T-cell (primary cell): ENCODE measurements at regions of chr16 and their contacts with region 1.

Region 1: GRCh38 chr16:72182976-72183375 is 11.0 kb upstream of the PMFBP1 start:
- DNase-seq: no peak
- ATAC-seq: no peak
- H3K4me3 ChIP-seq: no peak overlapping the region
- H3K4me3 Mint-ChIP-seq: no peak overlapping the region
- H3K27ac ChIP-seq: no peak overlapping the region
- H3K27ac Mint-ChIP-seq: no peak overlapping the region
- H3K4me1 ChIP-seq: no peaks in the 10 kb centered on the region
- H3K4me1 Mint-ChIP-seq: no peaks in the 10 kb centered on the region
- H3K27me3 ChIP-seq: no peaks in the 10 kb centered on the region
- H3K27me3 Mint-ChIP-seq: no peaks in the 10 kb centered on the region

Region 2: GRCh38 chr16:72001180-72001874 is 181.6 kb before region 1 on chr16:
- CTCF ChIA-PET with region 1: no interaction called
- POLR2A ChIA-PET with region 1: no interaction called
- DNase-seq: no peak
- ATAC-seq: no peak
- H3K4me3 ChIP-seq: no peak overlapping the region
- H3K4me3 Mint-ChIP-seq: no peak overlapping the region
- H3K27ac ChIP-seq: no peak overlapping the region
- H3K27ac Mint-ChIP-seq: no peak overlapping the region
- H3K4me1 ChIP-seq: no peaks in the 10 kb centered on the region
- H3K4me1 Mint-ChIP-seq: peaks cover 0 to 5% (median 2%) of the 10 kb centered on the region in 3 donors
- H3K27me3 ChIP-seq: peaks cover 0 to 12% of the 10 kb centered on the region in 2 experiments
- H3K27me3 Mint-ChIP-seq: peaks cover 13% of the 10 kb centered on the region in 2 donors

Region 3: DNA sequence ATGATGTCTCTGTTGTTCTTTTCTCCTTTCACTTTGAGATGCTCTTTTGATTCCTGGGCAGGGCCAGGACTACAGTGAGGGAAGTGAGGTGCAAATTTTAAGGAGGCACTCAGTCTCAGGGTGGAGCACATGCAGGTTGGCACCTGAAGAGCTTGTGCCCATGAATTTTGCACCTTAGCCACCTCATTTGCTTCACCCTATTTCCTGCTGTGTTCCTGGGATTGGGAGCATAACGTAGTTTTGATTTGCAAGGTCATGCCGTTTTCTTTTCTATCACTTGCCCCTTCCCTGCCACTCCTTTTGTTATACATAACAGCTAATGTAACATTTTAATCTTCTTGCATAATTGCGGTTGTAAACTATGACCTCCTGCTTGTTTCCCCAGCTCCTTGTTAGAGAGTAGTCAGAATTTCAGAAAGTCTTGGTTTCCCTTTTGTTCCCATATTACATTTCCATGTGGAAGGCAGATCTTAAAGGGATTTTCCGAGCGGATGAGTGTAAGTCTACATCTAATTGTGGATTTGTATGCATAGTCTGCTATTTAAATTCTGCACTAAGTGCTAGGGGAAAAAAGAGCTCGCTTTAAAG is 20.8 kb before region 1 on chr16:
- CTCF ChIA-PET with region 1: interaction called in 1 of 2 experiments, 10 read pairs
- POLR2A ChIA-PET with region 1: interaction called in 1 of 2 experiments, 3 read pairs
- DNase-seq: no peak
- ATAC-seq: no peak
- H3K4me3 ChIP-seq: no peak overlapping the region
- H3K4me3 Mint-ChIP-seq: no peak overlapping the region
- H3K27ac ChIP-seq: no peak overlapping the region
- H3K27ac Mint-ChIP-seq: no peak overlapping the region
- H3K4me1 ChIP-seq: no peaks in the 10 kb centered on the region
- H3K4me1 Mint-ChIP-seq: no peaks in the 10 kb centered on the region
- H3K27me3 ChIP-seq: peaks cover 0 to 5% of the 10 kb centered on the region in 2 experiments
- H3K27me3 Mint-ChIP-seq: no peaks in the 10 kb centered on the region

Region 4: DNA sequence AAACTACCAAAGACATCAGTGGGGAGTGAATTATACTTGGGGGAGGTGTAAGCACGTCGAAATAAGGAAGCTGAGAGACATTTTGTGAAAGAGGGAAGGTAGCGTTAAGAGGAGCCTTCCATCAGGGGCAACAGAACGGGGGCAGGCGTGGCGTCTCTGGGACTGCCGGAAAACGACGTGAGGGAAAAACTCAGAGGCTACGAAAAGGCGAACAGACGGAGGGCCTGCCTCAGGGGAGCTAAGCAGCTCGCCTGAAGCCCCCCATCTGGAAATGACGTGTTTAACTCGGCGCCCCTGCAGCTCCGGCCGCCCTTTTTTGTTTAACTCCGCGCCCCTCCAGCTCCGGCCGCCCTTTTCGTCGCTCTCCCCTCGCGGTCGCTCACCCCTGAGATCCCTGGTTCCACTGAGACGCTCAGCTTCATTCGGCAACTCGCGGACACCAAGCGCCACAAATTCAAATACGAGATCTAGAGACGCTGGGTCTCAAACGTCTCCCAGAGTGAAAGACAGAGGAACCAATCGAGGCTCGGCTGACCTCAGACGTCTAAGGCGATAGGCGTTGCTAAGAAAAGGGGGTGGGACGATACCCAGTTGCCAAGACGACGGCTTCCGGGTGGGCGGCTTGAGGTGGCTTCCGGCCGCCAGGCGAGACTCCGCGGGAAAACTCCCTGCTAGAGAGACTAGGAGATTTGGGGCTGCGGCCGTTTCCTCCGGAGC is 481.7 kb after region 1 on chr16:
- CTCF ChIA-PET with region 1: no interaction called
- POLR2A ChIA-PET with region 1: no interaction called
- DNase-seq: peak; percentile 82 to 98 (median 92)
- ATAC-seq: peak; percentile 99 to 100 (median 100)
- H3K4me3 ChIP-seq: peak overlapping the region; percentile 83 to 98
- H3K4me3 Mint-ChIP-seq: peak overlapping the region; percentile 98 to 100 (median 99)
- H3K27ac ChIP-seq: peak overlapping the region; percentile 69
- H3K27ac Mint-ChIP-seq: peak overlapping the region; percentile 68 to 92
- H3K4me1 ChIP-seq: peaks cover 6 to 10% of the 10 kb centered on the region in 2 experiments
- H3K4me1 Mint-ChIP-seq: peaks cover 11 to 23% (median 20%) of the 10 kb centered on the region in 3 donors
- H3K27me3 ChIP-seq: peaks cover 0 to 2% of the 10 kb centered on the region in 2 experiments
- H3K27me3 Mint-ChIP-seq: peaks cover 0 to 5% of the 10 kb centered on the region in 2 donors